ENCODE measurements at regions of chr7 and their contacts with region 1.

Region 1: GRCh38 chr7:26365077-26365900 is 73.6 kb downstream of the SNX10 start:
- H3K4me3 ChIP-seq: no peak overlapping the region
- H3K27ac ChIP-seq: no peak overlapping the region
- H3K4me1 ChIP-seq: no peaks in the 10 kb centered on the region
- CTCF ChIP-seq: peak; percentile 58

Region 2: DNA sequence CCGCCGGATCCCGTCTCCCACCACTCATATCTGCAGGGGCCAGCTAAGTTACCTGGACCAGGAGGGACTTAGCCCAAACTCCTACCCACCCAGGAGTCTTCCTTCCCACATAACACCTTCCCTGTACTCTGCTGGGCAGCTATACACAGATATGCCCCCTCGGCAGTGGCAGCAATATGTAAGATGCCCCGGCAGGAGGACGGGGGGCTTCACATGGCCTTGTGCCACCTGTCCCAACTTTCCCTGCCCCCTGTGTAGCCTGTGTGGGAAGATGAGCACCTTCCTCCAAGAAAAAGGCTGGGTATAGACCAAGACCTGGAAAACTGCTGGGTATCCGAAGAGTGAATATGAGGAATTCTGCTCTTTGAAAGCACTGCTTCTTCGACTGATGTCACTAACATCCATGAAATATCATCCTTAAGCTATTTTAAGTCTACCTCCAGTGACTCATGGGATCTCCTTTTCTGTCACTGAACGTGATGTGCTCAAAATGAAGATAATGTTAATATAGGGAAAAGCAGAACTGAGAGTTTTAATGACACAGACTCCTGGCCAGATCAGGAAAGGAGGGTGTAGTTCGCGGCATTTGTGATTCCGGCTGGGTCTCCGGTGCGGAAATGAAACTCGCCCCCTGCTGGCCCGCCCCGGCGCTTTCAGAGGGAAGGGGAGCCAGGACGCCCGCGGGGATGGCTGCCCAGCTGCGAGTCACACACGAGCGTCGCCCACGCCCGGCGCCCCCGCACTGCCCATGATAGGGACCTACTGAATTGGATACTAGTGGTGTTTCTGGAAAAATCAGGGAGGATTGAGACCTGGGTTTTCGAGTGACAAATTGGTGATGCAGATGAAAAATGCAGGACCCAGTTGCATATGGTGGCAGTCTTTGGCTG is 470.1 kb before region 1 on chr7:
- CTCF ChIA-PET with region 1: interaction called, 167 read pairs
- POLR2A ChIA-PET with region 1: interaction called, 8 read pairs
- H3K4me3 ChIP-seq: peak overlapping the region; percentile 19
- H3K27ac ChIP-seq: peak overlapping the region; percentile 16; the same call in 1 of the 2 replicates
- H3K4me1 ChIP-seq: peaks cover 5% of the 10 kb centered on the region; the same call in 1 of the 2 replicates
- CTCF ChIP-seq: peak; percentile 65

Region 3: GRCh38 chr7:26090927-26091519 is 274.3 kb before region 1 on chr7:
- CTCF ChIA-PET with region 1: interaction called, 39 read pairs
- POLR2A ChIA-PET with region 1: no interaction called
- H3K4me3 ChIP-seq: no peak overlapping the region
- H3K27ac ChIP-seq: no peak overlapping the region; the same call in 1 of the 2 replicates
- H3K4me1 ChIP-seq: no peaks in the 10 kb centered on the region
- CTCF ChIP-seq: peak; percentile 49

Region 4: DNA sequence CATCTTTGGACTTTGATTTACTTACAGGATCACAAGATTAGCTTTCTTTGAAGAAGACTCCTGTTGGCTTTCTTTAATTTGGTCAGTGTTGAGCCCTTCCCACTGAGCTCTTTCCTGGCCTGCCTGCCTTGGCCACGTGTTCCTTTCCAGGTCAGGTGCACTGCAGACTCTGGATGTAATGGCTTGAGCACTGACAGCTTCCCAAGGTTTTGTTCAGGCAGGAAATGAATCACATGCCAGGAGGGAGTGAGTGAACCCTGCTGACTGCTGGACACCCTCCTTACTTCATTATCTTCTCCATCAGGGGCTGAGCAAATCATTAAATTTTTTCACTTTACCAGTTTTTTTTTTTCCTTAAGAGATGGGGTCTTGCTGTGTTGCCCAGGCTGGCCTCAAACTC is 43.9 kb before region 1 on chr7:
- CTCF ChIA-PET with region 1: no interaction called
- POLR2A ChIA-PET with region 1: no interaction called
- H3K4me3 ChIP-seq: no peak overlapping the region
- H3K27ac ChIP-seq: no peak overlapping the region
- H3K4me1 ChIP-seq: no peaks in the 10 kb centered on the region
- CTCF ChIP-seq: no peak

Region 5: DNA sequence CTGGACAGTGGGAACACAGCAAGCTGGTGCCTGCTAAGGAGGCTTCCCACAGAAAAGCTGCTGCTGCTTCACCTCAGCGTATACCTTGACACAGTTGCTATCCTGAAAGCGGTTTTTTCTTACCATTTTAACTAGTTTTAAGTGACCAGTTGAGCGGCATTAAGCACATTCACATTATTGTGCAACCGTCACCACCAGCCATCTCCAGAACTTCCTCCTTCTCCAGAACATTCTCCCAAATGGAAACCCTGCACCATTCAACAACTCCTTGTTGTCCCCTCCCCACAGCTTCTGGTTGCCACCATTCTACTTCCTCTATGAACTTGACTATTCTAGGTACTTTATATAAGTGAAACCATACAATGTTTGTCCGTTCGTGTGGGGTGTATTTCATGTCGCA is 96.2 kb after region 1 on chr7:
- CTCF ChIA-PET with region 1: no interaction called
- POLR2A ChIA-PET with region 1: no interaction called
- H3K4me3 ChIP-seq: no peak overlapping the region
- H3K27ac ChIP-seq: no peak overlapping the region
- H3K4me1 ChIP-seq: no peaks in the 10 kb centered on the region
- CTCF ChIP-seq: no peak

Region 6: GRCh38 chr7:26500749-26501352 is 135.6 kb after region 1 on chr7:
- CTCF ChIA-PET with region 1: interaction called, 19 read pairs
- POLR2A ChIA-PET with region 1: no interaction called
- H3K4me3 ChIP-seq: no peak overlapping the region
- H3K27ac ChIP-seq: no peak overlapping the region
- H3K4me1 ChIP-seq: no peaks in the 10 kb centered on the region
- CTCF ChIP-seq: no peak

Region 7: DNA sequence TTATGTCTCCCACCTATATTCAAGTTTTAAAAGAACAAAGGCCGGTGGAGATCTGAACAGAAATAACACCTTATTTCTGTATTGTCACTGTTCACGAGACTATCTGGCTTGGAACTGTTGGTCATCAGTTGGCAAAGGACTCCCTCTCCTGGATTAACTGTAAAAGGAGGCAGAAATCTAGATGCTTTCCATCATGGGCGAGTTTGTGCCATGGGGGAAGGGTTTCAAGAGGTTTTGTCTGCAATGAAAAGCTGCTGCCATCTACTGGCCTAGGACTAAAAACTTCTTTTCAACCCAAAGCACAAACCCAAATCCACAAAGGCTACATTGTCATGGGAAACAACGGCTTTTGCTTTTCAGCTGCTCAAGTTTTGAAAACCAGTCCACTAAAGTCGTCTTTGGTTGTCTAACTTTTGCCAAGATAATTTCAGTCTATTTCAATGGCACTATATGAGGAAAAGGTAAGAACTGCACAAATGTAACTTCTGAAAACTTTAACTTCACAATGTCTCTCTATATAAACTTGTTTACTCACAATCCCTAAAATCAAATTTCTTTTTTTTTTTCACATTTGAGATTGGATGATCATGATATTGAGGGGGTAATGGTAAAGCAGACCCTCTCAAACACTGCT is 302.3 kb after region 1 on chr7:
- CTCF ChIA-PET with region 1: interaction called, 110 read pairs
- POLR2A ChIA-PET with region 1: interaction called, 6 read pairs
- H3K4me3 ChIP-seq: no peak overlapping the region
- H3K27ac ChIP-seq: no peak overlapping the region
- H3K4me1 ChIP-seq: peaks cover 16% of the 10 kb centered on the region
- CTCF ChIP-seq: peak; percentile 90

Region 8: GRCh38 chr7:26681819-26682418 is 316.6 kb after region 1 on chr7:
- CTCF ChIA-PET with region 1: interaction called, 11 read pairs
- POLR2A ChIA-PET with region 1: no interaction called
- H3K4me3 ChIP-seq: no peak overlapping the region
- H3K27ac ChIP-seq: no peak overlapping the region
- H3K4me1 ChIP-seq: peaks cover 33% of the 10 kb centered on the region
- CTCF ChIP-seq: no peak

Measured in HEK293 (cell line).